CD4-positive, alpha-beta T cell (primary cell): ENCODE measurements at regions of chr11 and their contacts with region 1.

Region 1: GRCh38 chr11:62737196-62737595 is 8.9 kb downstream of the TTC9C start:
- DNase-seq: no peak
- ATAC-seq: no peak
- H3K4me3 ChIP-seq: no peak overlapping the region
- H3K4me3 Mint-ChIP-seq: no peak overlapping the region
- H3K27ac ChIP-seq: no peak overlapping the region
- H3K27ac Mint-ChIP-seq: no peak overlapping the region
- H3K4me1 ChIP-seq: peaks cover 5% of the 10 kb centered on the region
- H3K4me1 Mint-ChIP-seq: peaks cover 8% of the 10 kb centered on the region
- H3K27me3 ChIP-seq: no peaks in the 10 kb centered on the region
- H3K27me3 Mint-ChIP-seq: no peaks in the 10 kb centered on the region
- CTCF ChIP-seq: no peak

Region 2: GRCh38 chr11:63023841-63024648 is 286.8 kb after region 1 on chr11:
- CTCF ChIA-PET with region 1: no interaction called
- POLR2A ChIA-PET with region 1: no interaction called
- intact Hi-C with region 1: loop called in 1 of 2 experiments (anchors 5 kb)
- DNase-seq: peak; percentile 71 to 89 (median 83)
- ATAC-seq: peak; percentile 95
- H3K4me3 ChIP-seq: no peak overlapping the region
- H3K4me3 Mint-ChIP-seq: no peak overlapping the region
- H3K27ac ChIP-seq: no peak overlapping the region
- H3K27ac Mint-ChIP-seq: no peak overlapping the region
- H3K4me1 ChIP-seq: peaks cover 6% of the 10 kb centered on the region
- H3K4me1 Mint-ChIP-seq: no peaks in the 10 kb centered on the region
- H3K27me3 ChIP-seq: peaks cover 0 to 5% of the 10 kb centered on the region in 2 experiments
- H3K27me3 Mint-ChIP-seq: peaks cover 47% of the 10 kb centered on the region
- CTCF ChIP-seq: peak; percentile 100